Ascending aorta (tissue), 2 donors: ENCODE measurements at regions of chr2 and their contacts with region 1.

Region 1: DNA sequence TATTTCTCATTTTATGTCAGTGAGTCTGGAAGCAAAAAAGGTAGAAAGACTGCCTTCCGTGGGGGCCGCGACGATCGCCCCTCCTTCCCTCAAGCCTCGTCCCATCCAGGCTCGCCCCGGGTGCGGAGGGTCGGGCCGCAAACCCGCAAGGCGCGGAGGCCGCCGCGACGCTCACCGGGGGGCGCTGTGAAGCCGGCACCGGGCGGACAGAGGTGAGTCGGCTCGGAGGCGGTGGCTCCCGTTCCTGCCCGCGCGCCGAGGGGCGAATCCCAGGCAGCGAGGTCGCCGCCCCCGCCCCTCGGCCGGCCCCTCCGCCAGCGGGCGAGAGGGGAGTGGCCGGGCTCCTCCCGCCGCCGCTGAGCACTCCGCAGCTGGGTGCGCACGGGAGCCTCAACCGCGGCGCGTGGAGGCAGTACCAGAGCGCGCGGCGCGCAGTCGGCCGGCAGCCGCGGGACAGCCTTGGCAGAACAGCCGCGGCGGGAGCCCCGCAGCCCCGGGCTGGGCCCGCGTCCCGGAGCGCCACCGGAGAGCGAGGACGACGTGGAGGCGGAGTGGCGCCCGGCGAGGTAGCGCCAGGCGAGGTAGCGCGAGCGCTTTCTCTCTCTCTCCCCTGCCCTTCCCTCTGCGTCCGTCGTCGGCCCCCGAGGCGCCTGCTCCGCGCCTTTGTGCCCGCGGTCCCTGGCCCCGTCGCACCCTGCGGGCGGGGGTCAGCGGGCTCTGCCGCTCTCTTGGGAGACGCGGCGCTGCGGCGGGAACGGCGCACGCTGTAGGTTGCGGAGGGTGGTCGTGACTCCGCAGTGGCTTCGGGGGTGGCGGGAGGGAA is at the start of gene MYO1B:
- DNase-seq: peak in 1 of 2 donors; percentile 85
- H3K4me3 ChIP-seq: peak within 1 kb of the TSS; percentile 83
- H3K27ac ChIP-seq: peak within 1 kb of the TSS; percentile 76 to 85
- H3K4me1 ChIP-seq: peaks cover 0 to 17% of the 10 kb centered on the region in 2 donors
- H3K27me3 ChIP-seq: no peaks in the 10 kb centered on the region
- CTCF ChIP-seq: peak; percentile 27 to 80 (median 58)
- total RNA-seq, gene MYO1B: 27.4 TPM

Region 2: GRCh38 chr2:191115804-191116203 is 129.5 kb before region 1 on chr2:
- intact Hi-C with region 1: no loop called
- DNase-seq: no peak
- H3K4me3 ChIP-seq: no peak overlapping the region
- H3K27ac ChIP-seq: no peak overlapping the region
- H3K4me1 ChIP-seq: no peaks in the 10 kb centered on the region
- H3K27me3 ChIP-seq: no peaks in the 10 kb centered on the region
- CTCF ChIP-seq: no peak

Region 3: GRCh38 chr2:191165176-191165643 is 80.0 kb before region 1 on chr2:
- intact Hi-C with region 1: no loop called
- DNase-seq: no peak
- H3K4me3 ChIP-seq: no peak overlapping the region
- H3K27ac ChIP-seq: no peak overlapping the region
- H3K4me1 ChIP-seq: peaks cover 7 to 21% of the 10 kb centered on the region in 2 donors
- H3K27me3 ChIP-seq: no peaks in the 10 kb centered on the region
- CTCF ChIP-seq: peak; percentile 39 to 79 (median 73)

Region 4: DNA sequence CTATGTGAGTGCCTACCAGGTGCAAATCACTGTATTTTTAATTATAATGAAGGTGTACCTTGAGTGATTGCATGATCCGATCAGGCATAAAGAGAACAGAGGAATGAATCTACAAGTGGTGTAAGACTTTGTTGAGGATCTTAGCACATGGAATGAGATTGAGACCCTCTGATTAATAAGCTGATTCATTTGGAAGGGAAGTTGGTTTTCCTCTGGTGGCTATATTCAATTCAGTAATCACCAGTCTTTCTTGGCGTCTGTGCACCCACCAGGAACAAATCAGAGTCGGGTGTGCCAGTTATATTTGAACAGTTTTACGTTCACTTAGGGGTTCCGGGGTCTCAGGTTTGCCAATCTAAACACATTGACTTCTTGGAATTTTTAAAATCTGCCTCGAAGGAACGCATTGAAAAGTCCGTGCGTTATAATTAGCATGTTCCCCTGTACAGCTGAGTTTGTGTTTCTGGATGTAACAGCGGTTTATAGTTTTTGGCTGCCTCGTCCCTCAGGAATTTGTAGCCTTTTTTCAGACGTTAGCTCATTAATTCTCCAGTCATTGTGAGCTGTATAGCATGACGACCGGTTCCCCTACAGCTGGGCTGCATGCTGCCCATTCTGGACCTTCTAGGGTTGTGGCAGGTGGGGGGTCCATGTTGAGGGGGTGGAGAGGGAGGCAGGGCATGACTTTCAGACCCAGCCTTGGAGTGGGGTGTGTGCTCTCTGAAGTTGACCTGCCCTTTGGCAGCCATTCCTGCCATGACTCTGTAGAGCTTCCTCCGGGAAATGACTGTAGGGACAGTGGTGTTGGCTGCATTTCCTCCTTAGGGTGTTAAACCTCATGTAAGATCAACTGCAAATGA is 20.3 kb after region 1 on chr2:
- intact Hi-C with region 1: loop called (anchors 2 kb)
- DNase-seq: peak in 1 of 2 donors; percentile 79
- H3K4me3 ChIP-seq: peak overlapping the region in 1 of 2 donors; percentile 26
- H3K27ac ChIP-seq: peak overlapping the region; percentile 84 to 89
- H3K4me1 ChIP-seq: peaks cover 1 to 27% of the 10 kb centered on the region in 2 donors
- H3K27me3 ChIP-seq: no peaks in the 10 kb centered on the region
- CTCF ChIP-seq: no peak

Region 5: DNA sequence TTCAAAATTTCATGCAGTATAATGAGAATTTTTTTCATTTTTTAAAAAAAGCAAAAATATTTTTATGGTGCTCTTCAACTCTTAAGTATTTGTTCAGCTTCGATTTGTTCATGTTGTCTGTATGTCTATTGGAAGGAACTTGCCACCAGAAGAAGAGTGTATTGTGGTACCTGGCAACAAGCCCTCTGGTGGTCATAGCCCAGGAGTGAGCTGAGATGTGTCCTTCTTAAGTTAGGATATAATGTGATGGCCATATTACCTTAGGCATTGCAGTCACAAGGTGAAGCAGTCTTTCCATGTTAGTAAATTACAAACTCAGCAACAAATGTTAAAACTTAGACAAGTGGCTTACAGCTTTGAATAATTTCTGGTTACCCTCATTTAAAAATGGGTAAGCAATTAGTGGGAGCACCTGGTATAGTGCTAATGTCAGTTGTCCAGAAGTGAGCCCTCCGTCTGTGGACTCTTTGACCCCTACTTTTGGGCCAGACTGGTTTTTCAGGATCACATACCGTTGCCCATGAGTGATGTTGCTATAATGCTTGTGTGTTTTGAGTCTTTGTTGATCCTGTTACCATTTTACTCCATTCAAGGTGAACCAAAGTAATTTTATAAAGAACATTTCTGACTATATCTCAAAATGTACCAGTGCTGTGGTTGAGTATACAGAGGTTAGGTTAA is 57.3 kb after region 1 on chr2:
- intact Hi-C with region 1: loop called (anchors 5 kb)
- DNase-seq: no peak
- H3K4me3 ChIP-seq: no peak overlapping the region
- H3K27ac ChIP-seq: no peak overlapping the region
- H3K4me1 ChIP-seq: peaks cover 3 to 24% of the 10 kb centered on the region in 2 donors
- H3K27me3 ChIP-seq: no peaks in the 10 kb centered on the region
- CTCF ChIP-seq: no peak

Region 6: DNA sequence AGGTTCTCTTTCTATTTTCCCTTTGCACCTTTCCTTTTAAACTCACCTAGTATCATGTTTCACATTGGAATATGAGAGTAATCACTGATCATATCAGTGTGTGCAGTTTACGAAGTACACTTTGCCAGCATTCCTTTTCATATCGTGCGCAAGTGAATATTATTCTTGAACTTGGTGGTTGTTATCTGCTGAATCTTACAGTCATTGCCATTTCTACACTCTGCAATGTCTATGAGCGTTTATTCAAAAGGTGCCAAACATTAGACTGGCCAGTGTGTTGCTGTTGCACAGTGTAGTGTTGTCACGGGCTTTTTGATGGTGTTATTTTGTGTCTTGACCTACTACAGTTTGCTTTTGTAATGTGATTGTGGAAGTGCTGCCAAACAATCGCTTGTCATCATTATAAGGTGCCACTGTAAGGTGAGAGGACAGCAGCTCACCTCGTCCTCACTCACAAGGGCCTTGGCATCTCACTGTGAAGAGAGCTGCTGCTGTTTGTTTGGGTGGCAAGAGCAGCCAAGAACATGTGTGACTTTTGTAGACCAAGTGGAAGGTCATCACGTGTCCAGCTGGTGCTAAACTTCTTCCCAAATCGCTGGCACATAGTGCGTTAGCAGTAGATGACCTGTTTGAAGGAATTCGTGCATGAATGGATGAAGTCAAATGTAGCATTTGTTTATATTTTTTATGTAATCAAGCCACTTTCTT is 113.2 kb after region 1 on chr2:
- intact Hi-C with region 1: no loop called
- DNase-seq: no peak
- H3K4me3 ChIP-seq: no peak overlapping the region
- H3K27ac ChIP-seq: peak overlapping the region in 1 of 2 donors; percentile 9
- H3K4me1 ChIP-seq: peaks cover 0 to 7% of the 10 kb centered on the region in 2 donors
- H3K27me3 ChIP-seq: no peaks in the 10 kb centered on the region
- CTCF ChIP-seq: no peak

Region 7: DNA sequence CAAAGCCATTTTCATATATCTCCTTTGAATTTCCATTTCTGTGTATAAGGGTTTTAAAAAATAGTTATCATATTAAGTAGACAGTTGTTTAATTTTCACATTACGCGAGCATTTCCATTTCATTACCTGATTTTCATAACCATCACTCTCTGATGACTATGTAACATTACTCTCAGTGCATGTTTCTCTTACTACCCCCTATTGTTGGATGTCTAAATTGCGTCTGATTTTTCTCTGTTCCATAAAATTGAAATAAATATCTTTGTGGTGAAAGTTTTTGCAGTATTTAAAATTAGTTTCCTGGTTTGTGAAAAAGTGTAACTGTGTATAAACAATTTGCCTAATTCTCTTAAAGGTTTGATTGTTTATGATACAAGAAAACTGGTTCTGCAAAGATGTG is 123.8 kb after region 1 on chr2:
- intact Hi-C with region 1: loop called (anchors 5 kb)
- DNase-seq: no peak
- H3K4me3 ChIP-seq: no peak overlapping the region
- H3K27ac ChIP-seq: no peak overlapping the region
- H3K4me1 ChIP-seq: peaks cover 6 to 14% of the 10 kb centered on the region in 2 donors
- H3K27me3 ChIP-seq: no peaks in the 10 kb centered on the region
- CTCF ChIP-seq: peak in 2 of 3 experiments; percentile 7 to 29

Region 8: GRCh38 chr2:191386938-191387536 is 141.8 kb after region 1 on chr2:
- intact Hi-C with region 1: loop called (anchors 5 kb)
- DNase-seq: no peak
- H3K4me3 ChIP-seq: no peak overlapping the region
- H3K27ac ChIP-seq: peak overlapping the region; percentile 73 to 81
- H3K4me1 ChIP-seq: peaks cover 0 to 26% of the 10 kb centered on the region in 2 donors
- H3K27me3 ChIP-seq: no peaks in the 10 kb centered on the region
- CTCF ChIP-seq: no peak

Region 9: DNA sequence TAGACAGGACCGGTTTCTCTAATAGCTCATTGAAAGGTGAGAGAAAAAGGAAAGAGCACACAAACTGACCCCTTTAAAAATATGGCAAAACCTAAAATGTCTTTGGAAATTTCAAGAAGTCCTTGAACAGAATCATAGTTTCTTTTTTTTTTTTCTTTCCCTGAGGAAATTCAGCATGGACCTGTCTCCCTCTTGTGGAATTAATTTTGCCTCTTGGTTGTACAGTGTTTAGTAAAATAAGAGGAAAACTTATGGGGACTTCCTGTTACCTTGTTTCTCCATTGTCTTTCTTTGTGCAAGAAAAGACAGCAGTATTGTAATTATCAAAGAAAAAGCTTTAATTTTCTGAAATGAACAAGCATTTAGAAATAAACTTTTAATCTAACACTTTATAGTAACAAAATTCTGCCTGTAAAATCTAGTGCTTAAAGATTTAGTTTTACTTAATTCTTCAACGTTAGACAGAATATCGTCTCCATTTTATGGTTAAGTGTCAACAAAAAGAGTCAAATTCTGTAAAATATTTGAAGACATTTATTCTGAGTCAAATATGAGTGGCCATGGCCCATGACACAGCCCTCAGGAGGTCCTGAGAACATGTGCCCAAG is 256.4 kb after region 1 on chr2:
- intact Hi-C with region 1: loop called (anchors 1 kb)
- DNase-seq: no peak
- H3K4me3 ChIP-seq: no peak overlapping the region
- H3K27ac ChIP-seq: peak overlapping the region; percentile 3 to 36
- H3K4me1 ChIP-seq: peaks cover 0 to 15% of the 10 kb centered on the region in 2 donors
- H3K27me3 ChIP-seq: no peaks in the 10 kb centered on the region
- CTCF ChIP-seq: peak; percentile 57 to 75 (median 66)